ENCODE measurements at regions of chr9 and their contacts with region 1.

Region 1: GRCh38 chr9:70297141-70297540 is 38.4 kb downstream of the SMC5 start:
- DNase-seq: no peak
- ATAC-seq: no peak
- H3K4me3 ChIP-seq: no peak overlapping the region
- H3K4me3 Mint-ChIP-seq: no peak overlapping the region
- H3K27ac ChIP-seq: no peak overlapping the region
- H3K27ac Mint-ChIP-seq: no peak overlapping the region
- H3K4me1 ChIP-seq: no peaks in the 10 kb centered on the region
- H3K4me1 Mint-ChIP-seq: peaks cover 8% of the 10 kb centered on the region
- H3K27me3 ChIP-seq: no peaks in the 10 kb centered on the region
- H3K27me3 Mint-ChIP-seq: no peaks in the 10 kb centered on the region
- CTCF ChIP-seq: no peak

Region 2: DNA sequence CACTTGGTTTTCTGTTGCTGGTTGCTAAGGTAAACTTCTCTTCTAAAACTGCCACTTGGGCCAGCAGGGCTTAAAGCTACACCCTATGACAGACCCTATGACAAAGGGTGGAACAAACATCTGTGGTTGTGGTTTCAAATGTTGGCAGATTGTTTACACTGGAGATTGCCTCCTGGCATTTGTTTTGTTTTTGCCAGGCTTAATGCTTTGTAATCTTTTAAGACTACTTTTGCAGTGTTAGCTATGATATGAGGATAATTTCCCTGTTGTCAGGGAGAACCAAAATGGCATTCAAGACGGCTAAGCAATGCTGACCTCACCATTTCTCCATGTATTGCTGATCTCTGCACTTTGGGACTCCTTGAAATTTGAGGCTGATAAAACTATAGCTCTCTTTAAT is 203.2 kb before region 1 on chr9:
- CTCF ChIA-PET with region 1: no interaction called
- POLR2A ChIA-PET with region 1: no interaction called
- intact Hi-C with region 1: no loop called
- DNase-seq: peak in 2 of 9 experiments; percentile 20 to 40
- ATAC-seq: no peak
- H3K4me3 ChIP-seq: no peak overlapping the region
- H3K4me3 Mint-ChIP-seq: no peak overlapping the region
- H3K27ac ChIP-seq: no peak overlapping the region
- H3K27ac Mint-ChIP-seq: no peak overlapping the region
- H3K4me1 ChIP-seq: no peaks in the 10 kb centered on the region
- H3K4me1 Mint-ChIP-seq: no peaks in the 10 kb centered on the region
- H3K27me3 ChIP-seq: no peaks in the 10 kb centered on the region
- H3K27me3 Mint-ChIP-seq: peaks cover 22% of the 10 kb centered on the region
- CTCF ChIP-seq: no peak

Region 3: GRCh38 chr9:70285246-70285645 is 11.9 kb before region 1 on chr9:
- CTCF ChIA-PET with region 1: no interaction called
- POLR2A ChIA-PET with region 1: no interaction called
- intact Hi-C with region 1: loop called in 1 of 2 experiments (anchors 2 kb)
- DNase-seq: no peak
- ATAC-seq: no peak
- H3K4me3 ChIP-seq: no peak overlapping the region
- H3K4me3 Mint-ChIP-seq: no peak overlapping the region
- H3K27ac ChIP-seq: no peak overlapping the region
- H3K27ac Mint-ChIP-seq: no peak overlapping the region
- H3K4me1 ChIP-seq: no peaks in the 10 kb centered on the region
- H3K4me1 Mint-ChIP-seq: peaks cover 10% of the 10 kb centered on the region
- H3K27me3 ChIP-seq: no peaks in the 10 kb centered on the region
- H3K27me3 Mint-ChIP-seq: no peaks in the 10 kb centered on the region
- CTCF ChIP-seq: no peak

Measured in CD8-positive, alpha-beta T cell (primary cell).